WTC11 (cell line): ENCODE measurements at regions of chr7 and their contacts with region 1.

Region 1: GRCh38 chr7:1059200-1060091 is 15.1 kb downstream of the GPR146 start:
- DNase-seq: peak; percentile 95
- ATAC-seq: peak; percentile 94
- H3K4me3 Mint-ChIP-seq: peak overlapping the region; percentile 64
- H3K27ac Mint-ChIP-seq: peak overlapping the region; percentile 80
- H3K4me1 Mint-ChIP-seq: peaks cover 10% of the 10 kb centered on the region
- H3K27me3 Mint-ChIP-seq: no peaks in the 10 kb centered on the region
- CTCF ChIP-seq: no peak

Region 2: GRCh38 chr7:1044191-1045068 is 15.0 kb before region 1 on chr7 and contains the start of gene GPR146:
- CTCF ChIA-PET with region 1: interaction called, 22 read pairs
- POLR2A ChIA-PET with region 1: interaction called, 3 read pairs
- DNase-seq: peak; percentile 99
- ATAC-seq: peak; percentile 93
- H3K4me3 Mint-ChIP-seq: peak within 1 kb of the TSS; percentile 71
- H3K27ac Mint-ChIP-seq: peak within 1 kb of the TSS; percentile 97
- H3K4me1 Mint-ChIP-seq: peaks cover 31% of the 10 kb centered on the region
- H3K27me3 Mint-ChIP-seq: no peaks in the 10 kb centered on the region
- CTCF ChIP-seq: 0 out of 2 replicates have a peak, but pooled peaks have one; percentile 18
- total RNA-seq, gene GPR146: 0.87 to 1.1 TPM (median 0.92 TPM) in 3 replicates